Activated CD4-positive, alpha-beta T cell treated with anti-CD3 and anti-CD28 coated beads for 36 hours (primary cell): ENCODE measurements at regions of chr11 and their contacts with region 1.

Region 1: DNA sequence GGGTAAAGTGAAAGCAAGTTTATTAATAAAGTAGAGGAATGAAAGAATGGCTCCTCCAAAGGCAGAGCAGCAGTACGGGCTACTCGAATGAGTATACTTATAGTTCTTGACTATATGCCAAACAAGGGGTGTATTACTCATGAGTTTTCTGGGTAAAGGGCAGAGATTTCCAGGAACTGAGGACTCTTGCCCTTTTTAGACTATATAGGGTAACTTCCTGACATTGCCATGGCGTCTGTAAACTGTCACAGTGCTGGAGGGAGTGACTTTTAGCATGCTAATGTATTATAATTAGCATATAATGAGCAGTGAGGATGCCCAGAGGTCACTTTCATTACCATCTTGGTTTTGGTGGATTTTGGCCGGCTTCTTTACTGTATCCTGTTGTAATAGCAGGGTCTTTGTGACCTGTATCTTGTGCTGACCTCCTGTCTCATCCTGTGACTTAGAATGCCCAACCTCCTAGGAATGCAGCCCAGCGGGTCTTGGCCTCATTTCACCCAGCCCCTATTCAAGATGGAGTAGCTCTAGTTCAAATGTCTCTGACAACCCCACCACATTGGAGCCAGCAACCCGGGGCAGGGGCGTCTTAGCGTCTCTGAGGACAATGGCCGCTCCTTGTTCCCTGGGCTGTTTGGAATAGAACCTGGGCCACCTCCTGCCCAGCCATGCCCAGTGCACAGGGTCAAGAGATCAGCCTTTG is 34.9 kb upstream of the CD82 start:
- DNase-seq: peak; percentile 51
- ATAC-seq: peak; percentile 92
- H3K4me3 Mint-ChIP-seq: no peak overlapping the region
- H3K27ac Mint-ChIP-seq: peak overlapping the region; percentile 86
- H3K4me1 Mint-ChIP-seq: peaks cover 33% of the 10 kb centered on the region
- H3K27me3 Mint-ChIP-seq: no peaks in the 10 kb centered on the region

Region 2: DNA sequence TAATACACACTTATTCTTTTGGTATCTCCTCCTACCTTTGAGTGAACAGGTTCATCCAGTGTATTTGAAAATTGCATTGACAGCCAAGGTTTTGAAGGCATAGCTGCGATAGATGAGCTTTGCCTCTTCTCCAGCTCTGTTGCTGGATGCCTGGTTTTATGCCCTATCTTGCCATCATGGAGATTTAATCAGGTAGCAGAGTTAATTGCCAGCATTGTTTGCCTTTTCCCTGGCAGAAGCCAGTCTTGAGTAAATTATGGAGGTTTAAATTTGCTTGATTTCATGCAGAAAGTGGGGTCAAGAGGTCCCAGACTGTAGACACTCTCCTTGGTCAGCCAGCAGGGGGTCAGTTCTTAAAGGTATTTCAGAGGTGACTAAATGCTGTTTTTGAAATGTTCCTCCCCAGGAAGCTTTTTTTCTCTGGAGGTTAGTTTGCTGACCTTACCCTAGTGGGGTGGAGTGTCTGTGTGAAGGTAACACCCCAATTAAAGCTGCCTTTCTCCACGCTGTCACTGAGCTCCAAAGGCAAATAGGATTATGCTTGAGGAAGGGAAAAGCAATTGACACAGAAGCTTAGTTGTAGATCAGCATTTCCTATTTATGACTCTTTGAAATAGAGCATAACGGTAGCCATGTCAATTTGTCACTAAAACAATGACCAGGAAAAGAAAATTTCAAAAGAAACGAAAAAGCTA is 339.1 kb before region 1 on chr11:
- CTCF ChIA-PET with region 1: no interaction called
- POLR2A ChIA-PET with region 1: no interaction called
- intact Hi-C with region 1: loop called in 1 of 2 experiments (anchors 2 kb)
- DNase-seq: no peak
- ATAC-seq: no peak
- H3K4me3 Mint-ChIP-seq: no peak overlapping the region
- H3K27ac Mint-ChIP-seq: no peak overlapping the region
- H3K4me1 Mint-ChIP-seq: peaks cover 37% of the 10 kb centered on the region
- H3K27me3 Mint-ChIP-seq: no peaks in the 10 kb centered on the region

Region 3: DNA sequence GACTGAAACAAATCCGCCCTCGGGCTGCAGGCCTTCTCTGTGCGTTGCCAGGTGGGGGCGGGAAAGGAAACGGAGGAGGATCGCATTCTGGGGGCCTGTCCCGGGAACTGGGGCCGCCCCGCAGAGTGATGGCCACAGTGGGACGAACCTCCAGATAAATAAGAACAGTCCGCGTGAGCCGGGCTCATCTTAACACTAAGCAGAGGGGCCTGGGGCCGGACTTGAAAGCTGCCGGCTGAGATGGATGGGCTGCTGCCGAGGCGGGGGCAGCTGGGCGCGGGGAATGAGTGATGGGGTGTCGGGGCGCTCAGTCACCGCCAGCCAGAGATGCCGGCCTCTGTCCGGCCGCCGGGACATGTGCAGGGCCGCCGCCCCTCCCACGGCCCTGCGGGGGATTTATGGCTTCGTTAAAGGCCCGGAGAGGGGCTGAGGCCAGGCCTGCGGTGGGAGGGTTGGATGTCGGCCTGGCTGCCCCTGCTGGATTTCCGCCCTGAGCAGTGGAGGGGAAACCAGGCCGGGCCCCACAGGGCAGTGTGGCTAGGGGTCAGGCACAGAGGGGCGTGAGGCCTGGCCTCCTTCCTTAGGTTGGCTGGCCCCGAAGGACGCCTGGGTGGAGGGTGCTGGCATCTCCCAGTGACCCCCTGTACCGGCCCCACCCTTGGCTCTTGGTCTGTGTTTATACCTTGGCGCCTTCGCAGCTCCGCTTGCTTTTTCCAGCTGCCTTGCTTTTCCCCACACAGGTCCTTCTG is 10.4 kb before region 1 on chr11:
- CTCF ChIA-PET with region 1: interaction called, 41 read pairs
- POLR2A ChIA-PET with region 1: no interaction called
- intact Hi-C with region 1: no loop called
- DNase-seq: no peak
- ATAC-seq: no peak
- H3K4me3 Mint-ChIP-seq: no peak overlapping the region
- H3K27ac Mint-ChIP-seq: no peak overlapping the region
- H3K4me1 Mint-ChIP-seq: peaks cover 2% of the 10 kb centered on the region
- H3K27me3 Mint-ChIP-seq: peaks cover 12% of the 10 kb centered on the region

Region 4: GRCh38 chr11:44775366-44775984 is 244.9 kb after region 1 on chr11:
- CTCF ChIA-PET with region 1: no interaction called
- POLR2A ChIA-PET with region 1: no interaction called
- intact Hi-C with region 1: no loop called
- DNase-seq: peak; percentile 72
- ATAC-seq: peak; percentile 64
- H3K4me3 Mint-ChIP-seq: no peak overlapping the region
- H3K27ac Mint-ChIP-seq: no peak overlapping the region
- H3K4me1 Mint-ChIP-seq: peaks cover 5% of the 10 kb centered on the region
- H3K27me3 Mint-ChIP-seq: no peaks in the 10 kb centered on the region

Region 5: GRCh38 chr11:44855493-44855849 is 324.9 kb after region 1 on chr11:
- CTCF ChIA-PET with region 1: no interaction called
- POLR2A ChIA-PET with region 1: no interaction called
- intact Hi-C with region 1: loop called in 1 of 2 experiments (anchors 1 kb)
- DNase-seq: peak; percentile 71
- ATAC-seq: peak; percentile 95
- H3K4me3 Mint-ChIP-seq: no peak overlapping the region
- H3K27ac Mint-ChIP-seq: no peak overlapping the region
- H3K4me1 Mint-ChIP-seq: peaks cover 20% of the 10 kb centered on the region
- H3K27me3 Mint-ChIP-seq: peaks cover 36% of the 10 kb centered on the region